CD8-positive, alpha-beta T cell (primary cell): ENCODE measurements at regions of chr6 and their contacts with region 1.

Region 1: GRCh38 chr6:121236984-121237383 is 97.3 kb downstream of the TBC1D32 start:
- DNase-seq: no peak
- ATAC-seq: no peak
- H3K4me3 ChIP-seq: no peak overlapping the region
- H3K4me3 Mint-ChIP-seq: no peak overlapping the region
- H3K27ac ChIP-seq: no peak overlapping the region
- H3K27ac Mint-ChIP-seq: no peak overlapping the region
- H3K4me1 ChIP-seq: no peaks in the 10 kb centered on the region
- H3K4me1 Mint-ChIP-seq: no peaks in the 10 kb centered on the region
- H3K27me3 ChIP-seq: no peaks in the 10 kb centered on the region
- H3K27me3 Mint-ChIP-seq: no peaks in the 10 kb centered on the region
- CTCF ChIP-seq: no peak

Region 2: DNA sequence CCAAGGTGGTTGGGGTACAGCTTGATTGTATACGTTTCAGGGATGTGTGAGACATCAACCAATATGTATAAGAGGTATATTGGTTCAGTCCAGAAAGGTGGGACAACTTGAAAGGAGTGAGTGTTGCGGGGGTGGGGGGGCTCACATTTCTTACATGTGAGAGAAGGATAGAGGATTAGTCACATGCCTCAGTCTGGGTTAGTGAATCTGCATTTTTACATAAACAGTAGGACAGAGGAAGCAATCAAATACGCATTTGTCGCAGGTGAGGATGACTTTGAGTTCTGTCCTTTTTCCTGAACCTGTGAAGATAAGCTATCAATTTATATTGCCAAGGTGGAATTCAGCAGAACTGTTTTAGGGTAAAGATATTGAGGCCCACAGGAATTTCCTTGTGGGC is 139.4 kb after region 1 on chr6:
- CTCF ChIA-PET with region 1: no interaction called
- POLR2A ChIA-PET with region 1: no interaction called
- intact Hi-C with region 1: loop called in 1 of 2 experiments (anchors 10 kb)
- DNase-seq: no peak
- ATAC-seq: no peak
- H3K4me3 ChIP-seq: no peak overlapping the region
- H3K4me3 Mint-ChIP-seq: no peak overlapping the region
- H3K27ac ChIP-seq: no peak overlapping the region
- H3K27ac Mint-ChIP-seq: no peak overlapping the region
- H3K4me1 ChIP-seq: no peaks in the 10 kb centered on the region
- H3K4me1 Mint-ChIP-seq: no peaks in the 10 kb centered on the region
- H3K27me3 ChIP-seq: no peaks in the 10 kb centered on the region
- H3K27me3 Mint-ChIP-seq: no peaks in the 10 kb centered on the region
- CTCF ChIP-seq: no peak

Region 3: GRCh38 chr6:121451250-121451649 is 214.3 kb after region 1 on chr6:
- CTCF ChIA-PET with region 1: no interaction called
- POLR2A ChIA-PET with region 1: no interaction called
- intact Hi-C with region 1: no loop called
- DNase-seq: no peak
- ATAC-seq: no peak
- H3K4me3 ChIP-seq: no peak overlapping the region
- H3K4me3 Mint-ChIP-seq: no peak overlapping the region
- H3K27ac ChIP-seq: no peak overlapping the region
- H3K27ac Mint-ChIP-seq: no peak overlapping the region
- H3K4me1 ChIP-seq: no peaks in the 10 kb centered on the region
- H3K4me1 Mint-ChIP-seq: no peaks in the 10 kb centered on the region
- H3K27me3 ChIP-seq: no peaks in the 10 kb centered on the region
- H3K27me3 Mint-ChIP-seq: peaks cover 12% of the 10 kb centered on the region
- CTCF ChIP-seq: no peak

Region 4: DNA sequence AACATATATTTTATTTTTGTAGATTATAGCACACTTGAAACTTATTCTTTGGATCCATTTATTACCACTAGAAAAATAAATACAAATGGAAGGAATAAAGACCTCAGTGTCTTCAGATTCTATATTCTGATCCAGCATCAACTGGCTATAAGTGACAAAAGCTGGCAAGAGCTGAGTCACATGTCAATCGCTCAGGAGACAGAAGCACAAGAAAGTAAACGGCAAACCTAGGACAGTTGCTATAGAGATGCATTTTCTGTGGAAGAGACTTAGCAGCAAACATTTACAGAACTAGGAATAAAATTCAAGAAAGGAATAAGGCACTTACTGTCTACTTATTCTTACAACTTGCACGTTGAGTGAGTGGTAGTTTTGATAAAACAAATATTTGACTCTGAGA is 1989.4 kb after region 1 on chr6:
- CTCF ChIA-PET with region 1: no interaction called
- POLR2A ChIA-PET with region 1: no interaction called
- intact Hi-C with region 1: loop called in 1 of 2 experiments (anchors 10 kb)
- DNase-seq: no peak
- ATAC-seq: no peak
- H3K4me3 ChIP-seq: no peak overlapping the region
- H3K4me3 Mint-ChIP-seq: no peak overlapping the region
- H3K27ac ChIP-seq: no peak overlapping the region
- H3K27ac Mint-ChIP-seq: no peak overlapping the region
- H3K4me1 ChIP-seq: no peaks in the 10 kb centered on the region
- H3K4me1 Mint-ChIP-seq: no peaks in the 10 kb centered on the region
- H3K27me3 ChIP-seq: no peaks in the 10 kb centered on the region
- H3K27me3 Mint-ChIP-seq: no peaks in the 10 kb centered on the region
- CTCF ChIP-seq: no peak